ENCODE measurements at regions of chr20 and their contacts with region 1.

Region 1: GRCh38 chr20:23072892-23073586 is 13.1 kb downstream of the CD93 start:
- DNase-seq: no peak
- H3K4me3 ChIP-seq: no peak overlapping the region
- H3K27ac ChIP-seq: no peak overlapping the region
- H3K4me1 ChIP-seq: no peaks in the 10 kb centered on the region
- H3K27me3 ChIP-seq: peaks cover 44% of the 10 kb centered on the region
- CTCF ChIP-seq: no peak

Region 2: DNA sequence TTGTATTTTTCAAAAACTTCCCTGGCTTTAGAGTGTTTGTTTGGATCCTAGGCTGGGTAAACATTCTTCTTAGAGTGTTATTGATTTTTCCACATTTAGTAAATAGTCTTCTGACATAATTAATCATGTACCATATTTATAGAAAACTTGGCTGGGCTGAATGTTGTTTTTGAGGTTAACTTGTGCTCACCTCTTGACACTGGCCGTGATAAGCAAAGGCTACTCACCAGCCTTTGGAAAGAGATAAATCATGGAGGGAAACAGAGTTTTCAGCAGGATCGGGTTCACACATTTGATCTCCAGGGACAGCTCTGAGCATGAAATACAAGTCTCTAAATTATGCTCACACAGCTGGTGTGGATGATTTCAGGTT is 19.3 kb after region 1 on chr20:
- CTCF ChIA-PET with region 1: no interaction called
- POLR2A ChIA-PET with region 1: no interaction called
- intact Hi-C with region 1: loop called (anchors 2 kb)
- DNase-seq: no peak
- H3K4me3 ChIP-seq: no peak overlapping the region
- H3K27ac ChIP-seq: no peak overlapping the region
- H3K4me1 ChIP-seq: no peaks in the 10 kb centered on the region
- H3K27me3 ChIP-seq: peaks cover 51% of the 10 kb centered on the region
- CTCF ChIP-seq: no peak

Measured in A673 (cell line).